ENCODE measurements at regions of chr14 and their contacts with region 1.

Region 1: DNA sequence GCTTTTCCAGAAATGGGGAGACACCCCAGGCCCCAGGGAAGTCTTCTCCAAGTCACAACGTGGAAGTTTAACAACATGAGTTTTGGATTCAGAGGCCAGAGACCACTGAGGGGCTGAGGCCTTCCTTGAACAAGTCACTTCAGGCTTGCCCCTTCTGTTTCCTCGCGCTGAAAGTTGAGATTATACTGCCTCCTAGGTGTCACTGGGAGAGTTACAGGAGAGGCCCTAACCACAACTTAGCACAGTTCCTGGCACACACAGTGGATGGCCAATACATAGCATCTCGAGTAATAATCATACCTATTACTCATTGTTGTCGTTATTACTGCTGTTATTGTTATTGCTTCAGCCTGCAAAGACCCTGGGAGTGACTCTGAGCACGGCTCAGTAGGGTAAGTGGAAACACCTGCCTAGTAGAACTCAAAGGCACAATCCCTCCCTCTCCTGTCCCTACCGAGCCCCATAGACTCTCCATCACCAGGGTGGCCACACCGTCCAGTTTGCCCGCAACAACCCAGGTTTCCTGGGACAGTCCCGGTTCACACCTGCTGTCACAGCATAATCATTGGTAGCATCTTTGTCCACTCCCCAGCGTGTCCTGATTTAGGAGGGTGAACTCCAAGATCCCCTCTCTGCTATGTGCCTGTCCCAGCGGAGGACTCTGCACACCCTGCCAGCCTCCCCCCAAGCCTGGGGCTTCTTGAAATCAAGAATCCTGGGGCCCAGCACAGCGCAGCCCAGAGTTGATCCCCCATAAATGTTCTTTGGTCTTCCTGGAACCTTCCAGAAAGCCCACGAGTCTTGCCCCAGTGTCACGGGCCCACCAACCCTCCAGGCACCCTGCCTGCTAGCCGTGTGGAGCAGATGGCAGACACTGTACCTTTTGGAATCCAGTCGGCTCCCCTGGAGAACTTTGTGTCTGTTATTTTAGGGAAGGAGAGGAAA is 85.0 kb downstream of the SYNE3 start:
- DNase-seq: peak; percentile 43
- ATAC-seq: peak; percentile 85
- H3K4me3 Mint-ChIP-seq: no peak overlapping the region
- H3K27ac Mint-ChIP-seq: no peak overlapping the region
- H3K4me1 Mint-ChIP-seq: no peaks in the 10 kb centered on the region
- H3K27me3 Mint-ChIP-seq: no peaks in the 10 kb centered on the region; the same call in 1 of the 2 replicates
- CTCF ChIP-seq: no peak

Region 2: DNA sequence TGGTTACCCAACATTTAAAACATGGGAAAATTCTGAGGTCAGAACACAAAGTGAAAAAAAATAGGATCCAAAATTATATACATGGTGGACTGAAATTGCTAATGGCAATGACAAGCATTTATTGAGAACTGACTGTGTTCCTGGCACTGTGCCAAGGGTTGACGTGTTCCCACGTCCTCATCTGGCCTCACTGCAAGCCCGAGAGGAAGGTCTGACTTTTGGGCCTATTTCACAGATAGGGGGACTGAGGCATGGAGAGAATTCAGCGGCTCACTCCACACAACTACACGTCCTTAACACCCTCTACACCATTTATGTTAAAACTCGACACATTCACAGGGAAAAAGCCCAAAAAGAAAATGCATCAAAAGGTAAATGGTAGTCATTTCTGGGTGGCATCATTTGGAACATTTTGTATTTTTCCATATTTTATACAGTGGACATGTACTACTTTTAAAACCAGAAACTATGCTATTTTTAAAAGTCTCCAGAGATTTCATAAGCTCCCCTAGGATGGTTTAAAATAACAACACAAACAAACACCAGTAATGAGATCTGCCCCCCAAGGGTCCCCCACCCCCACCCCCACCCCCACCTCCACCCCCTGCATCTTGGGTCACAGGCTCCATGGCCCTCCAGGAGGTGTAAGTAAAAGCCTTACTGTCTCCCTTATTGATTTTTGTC is 139.5 kb before region 1 on chr14:
- CTCF ChIA-PET with region 1: interaction called, 10 read pairs
- POLR2A ChIA-PET with region 1: no interaction called
- DNase-seq: no peak
- ATAC-seq: no peak
- H3K4me3 Mint-ChIP-seq: no peak overlapping the region
- H3K27ac Mint-ChIP-seq: no peak overlapping the region
- H3K4me1 Mint-ChIP-seq: peaks cover 43% of the 10 kb centered on the region
- H3K27me3 Mint-ChIP-seq: no peaks in the 10 kb centered on the region
- CTCF ChIP-seq: no peak

Region 3: DNA sequence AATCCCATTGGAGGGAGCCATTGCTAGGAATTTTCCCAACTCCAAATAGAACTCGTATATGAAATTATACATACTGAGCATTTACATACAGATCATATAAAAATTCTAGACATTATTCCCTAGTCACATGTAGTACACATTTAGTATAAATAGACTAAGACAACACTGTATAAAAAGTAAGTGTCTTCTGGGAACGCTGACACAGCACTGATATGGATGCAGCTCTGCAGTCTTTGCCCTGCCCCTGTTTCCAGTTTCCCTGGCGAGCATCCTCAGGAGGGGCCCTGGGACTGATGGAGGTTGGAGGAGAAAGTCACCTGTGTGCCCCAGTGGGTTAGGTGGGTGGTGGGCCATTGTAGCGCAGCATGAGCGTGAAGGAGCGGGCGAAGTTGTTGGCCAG is 14.0 kb before region 1 on chr14:
- CTCF ChIA-PET with region 1: interaction called, 17 read pairs
- POLR2A ChIA-PET with region 1: no interaction called
- DNase-seq: no peak
- ATAC-seq: no peak; the same call in 1 of the 2 replicates
- H3K4me3 Mint-ChIP-seq: no peak overlapping the region
- H3K27ac Mint-ChIP-seq: no peak overlapping the region
- H3K4me1 Mint-ChIP-seq: peaks cover 7% of the 10 kb centered on the region
- H3K27me3 Mint-ChIP-seq: peaks cover 9% of the 10 kb centered on the region
- CTCF ChIP-seq: no peak

Region 4: GRCh38 chr14:95452176-95452892 is 20.9 kb after region 1 on chr14:
- CTCF ChIA-PET with region 1: interaction called, 26 read pairs
- POLR2A ChIA-PET with region 1: no interaction called
- DNase-seq: peak; percentile 51
- ATAC-seq: peak; percentile 87
- H3K4me3 Mint-ChIP-seq: no peak overlapping the region
- H3K27ac Mint-ChIP-seq: no peak overlapping the region
- H3K4me1 Mint-ChIP-seq: no peaks in the 10 kb centered on the region
- H3K27me3 Mint-ChIP-seq: no peaks in the 10 kb centered on the region; the same call in 1 of the 2 replicates
- CTCF ChIP-seq: peak; percentile 47

Region 5: DNA sequence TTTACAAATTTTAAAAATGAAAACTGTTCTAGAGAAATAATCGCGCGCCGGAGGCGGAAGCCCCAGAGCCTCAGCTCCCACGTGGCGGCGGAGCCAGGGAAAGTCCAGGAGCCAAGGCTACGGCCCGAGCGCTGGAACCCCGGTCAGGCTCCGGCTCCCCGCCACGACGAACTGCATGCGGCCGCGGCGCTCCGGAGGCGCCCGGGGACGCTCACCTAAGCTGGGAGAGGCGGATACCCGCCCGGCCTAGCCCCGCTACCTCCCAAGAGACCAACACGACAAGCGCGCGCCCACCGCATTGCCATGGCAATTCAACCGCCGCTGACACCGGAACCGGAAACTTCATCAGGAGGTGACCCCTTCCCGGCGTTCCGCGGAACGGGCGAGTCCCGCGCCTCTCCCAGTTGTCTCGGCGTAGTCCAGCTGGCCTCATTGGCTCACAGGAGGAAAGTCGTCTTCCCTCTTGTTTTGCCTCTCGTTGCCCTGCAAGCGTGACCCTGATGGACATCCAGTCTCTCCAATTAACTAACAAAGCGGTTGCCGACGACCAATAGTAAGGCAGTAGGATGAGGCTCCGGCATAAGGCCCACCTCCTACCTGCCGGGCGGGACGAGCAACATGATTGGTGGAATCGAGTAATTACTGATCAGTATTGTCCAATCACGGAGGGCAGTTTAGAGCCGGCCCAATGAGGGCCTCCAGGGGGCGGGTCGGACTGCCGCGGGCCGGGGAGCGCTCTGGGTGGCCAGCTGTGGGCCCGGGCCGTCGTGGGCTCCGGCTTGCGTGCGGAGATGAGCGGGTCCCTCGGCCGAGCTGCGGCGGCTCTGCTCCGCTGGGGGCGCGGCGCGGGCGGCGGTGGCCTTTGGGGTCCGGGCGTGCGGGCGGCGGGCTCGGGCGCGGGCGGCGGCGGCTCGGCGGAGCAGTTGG is 103.1 kb after region 1 on chr14 and contains the start of gene GLRX5:
- CTCF ChIA-PET with region 1: interaction called, 10 read pairs
- POLR2A ChIA-PET with region 1: interaction called, 3 read pairs
- DNase-seq: peak; percentile 97
- ATAC-seq: peak; percentile 95
- H3K4me3 Mint-ChIP-seq: peak within 1 kb of the TSS; percentile 97
- H3K27ac Mint-ChIP-seq: peak within 1 kb of the TSS; percentile 87
- H3K4me1 Mint-ChIP-seq: peaks cover 45% of the 10 kb centered on the region
- H3K27me3 Mint-ChIP-seq: no peaks in the 10 kb centered on the region
- CTCF ChIP-seq: no peak
- total RNA-seq, gene GLRX5: 72.8 to 78.3 TPM (median 76.2 TPM) in 3 replicates

Region 6: GRCh38 chr14:95577067-95577800 is 145.8 kb after region 1 on chr14:
- CTCF ChIA-PET with region 1: no interaction called
- POLR2A ChIA-PET with region 1: no interaction called
- DNase-seq: no peak
- ATAC-seq: peak; percentile 27
- H3K4me3 Mint-ChIP-seq: no peak overlapping the region
- H3K27ac Mint-ChIP-seq: no peak overlapping the region
- H3K4me1 Mint-ChIP-seq: peaks cover 30% of the 10 kb centered on the region
- H3K27me3 Mint-ChIP-seq: peaks cover 91% of the 10 kb centered on the region
- CTCF ChIP-seq: no peak